Tibial artery (tissue), 4 donors: ENCODE measurements at regions of chr11 and their contacts with region 1.

Region 1: GRCh38 chr11:22304337-22304961 is 33.7 kb upstream of the SLC17A6 start:
- DNase-seq: no peak
- H3K4me3 ChIP-seq: no peak overlapping the region
- H3K27ac ChIP-seq: no peak overlapping the region
- H3K4me1 ChIP-seq: no peaks in the 10 kb centered on the region
- H3K27me3 ChIP-seq: peaks cover 0 to 3% of the 10 kb centered on the region in 2 donors
- CTCF ChIP-seq: peak; percentile 57 to 67

Region 2: GRCh38 chr11:20647976-20648565 is 1656.4 kb before region 1 on chr11:
- intact Hi-C with region 1: loop called (anchors 10 kb)
- DNase-seq: peak in 1 of 2 donors; percentile 29
- H3K4me3 ChIP-seq: no peak overlapping the region
- H3K27ac ChIP-seq: no peak overlapping the region
- H3K4me1 ChIP-seq: no peaks in the 10 kb centered on the region
- H3K27me3 ChIP-seq: peaks cover 0 to 24% of the 10 kb centered on the region in 2 donors
- CTCF ChIP-seq: peak; percentile 78 to 83

Region 3: GRCh38 chr11:22169833-22170232 is 134.6 kb before region 1 on chr11:
- intact Hi-C with region 1: loop called (anchors 10 kb)
- DNase-seq: no peak
- H3K4me3 ChIP-seq: no peak overlapping the region
- H3K27ac ChIP-seq: no peak overlapping the region
- H3K4me1 ChIP-seq: no peaks in the 10 kb centered on the region
- H3K27me3 ChIP-seq: peaks cover 0 to 3% of the 10 kb centered on the region in 2 donors
- CTCF ChIP-seq: peak in 1 of 2 experiments; percentile 32